Thyroid gland (tissue), 4 donors: ENCODE measurements at regions of chr5 and their contacts with region 1.

Region 1: DNA sequence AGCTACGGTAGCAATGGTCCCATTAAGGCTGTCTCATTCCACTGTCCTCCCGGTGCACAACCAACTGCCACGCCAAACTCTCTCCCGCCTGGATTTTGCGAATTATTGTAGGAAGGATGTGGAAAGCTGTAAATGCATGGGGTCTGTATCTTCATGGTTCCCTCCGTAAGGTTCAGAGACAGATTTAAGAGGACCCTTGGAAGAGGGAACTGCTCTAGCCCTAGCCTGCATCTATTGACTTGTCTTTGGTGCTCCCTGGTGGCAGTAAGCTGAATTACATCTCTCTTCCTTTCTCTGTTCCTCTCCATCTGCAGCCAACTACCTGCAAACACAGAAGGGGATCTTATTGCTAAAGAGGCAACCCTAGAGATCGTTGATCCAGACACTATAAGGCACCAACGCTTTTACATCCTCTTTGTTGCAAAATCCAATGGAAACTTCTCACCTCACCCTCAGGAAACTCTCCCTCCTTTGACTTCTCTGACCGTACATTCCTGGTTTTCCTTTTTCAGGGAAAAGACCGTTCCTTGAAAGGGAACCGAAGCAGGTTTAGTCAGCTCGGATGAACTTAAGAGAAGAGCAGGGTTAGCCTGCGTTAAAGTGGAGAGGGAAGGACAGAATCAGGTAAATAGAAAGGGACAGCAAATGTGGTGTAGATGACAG is 11.9 kb downstream of the CAPSL start:
- DNase-seq: peak; percentile 32 to 38
- H3K4me3 ChIP-seq: no peak overlapping the region
- H3K27ac ChIP-seq: no peak overlapping the region
- H3K4me1 ChIP-seq: no peaks in the 10 kb centered on the region
- H3K27me3 ChIP-seq: no peaks in the 10 kb centered on the region
- CTCF ChIP-seq: peak; percentile 75 to 94 (median 80)
- POLR2A ChIP-seq: no peak

Region 2: GRCh38 chr5:35617435-35618303 is 308.9 kb before region 1 on chr5 and contains the start of gene SPEF2:
- intact Hi-C with region 1: loop called (anchors 10 kb)
- DNase-seq: peak; percentile 86 to 87
- H3K4me3 ChIP-seq: peak within 1 kb of the TSS; percentile 66 to 88 (median 76)
- H3K27ac ChIP-seq: peak within 1 kb of the TSS in 2 of 3 donors; percentile 22 to 42
- H3K4me1 ChIP-seq: peaks cover 6% of the 10 kb centered on the region in 2 donors
- H3K27me3 ChIP-seq: no peaks in the 10 kb centered on the region
- CTCF ChIP-seq: peak; percentile 45 to 85 (median 79)
- POLR2A ChIP-seq: peak in 1 of 2 donors; percentile 8
- total RNA-seq, gene SPEF2: 17.7 to 39.5 (median 21.5) TPM

Region 3: DNA sequence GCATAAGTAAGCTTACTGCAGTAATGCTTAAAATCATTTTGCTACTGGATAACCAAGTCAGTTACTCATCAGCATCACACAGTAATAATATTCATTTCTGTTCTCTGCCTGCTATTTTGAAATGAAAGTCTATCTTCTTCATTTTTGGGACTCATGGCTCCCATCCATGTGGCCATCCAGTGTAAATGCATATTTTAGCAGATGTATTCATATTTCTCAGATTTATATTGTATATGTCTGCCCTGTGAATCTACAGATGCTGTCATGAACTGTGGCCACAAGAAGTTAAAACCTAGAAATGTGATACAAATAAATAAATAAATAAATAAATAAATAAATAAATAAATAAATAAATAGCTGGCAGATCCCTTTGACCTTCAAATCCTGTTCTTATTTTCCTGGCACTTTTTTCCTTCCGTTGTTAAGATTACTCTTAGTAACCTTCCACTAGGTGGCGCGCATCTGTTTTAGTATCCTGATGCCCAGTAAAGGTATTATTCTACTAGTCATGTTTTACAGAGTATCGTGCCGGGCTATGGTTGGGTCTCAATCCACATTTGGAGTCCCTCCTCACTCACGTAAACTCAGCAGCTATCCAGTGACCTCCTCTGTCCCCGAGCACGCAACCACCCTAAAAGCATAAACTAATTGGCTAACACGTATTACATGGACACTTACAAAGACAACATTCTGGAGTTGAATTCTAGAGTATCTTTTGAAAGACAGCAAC is 149.0 kb before region 1 on chr5:
- intact Hi-C with region 1: loop called (anchors 5 kb)
- DNase-seq: peak; percentile 79 to 84
- H3K4me3 ChIP-seq: no peak overlapping the region
- H3K27ac ChIP-seq: no peak overlapping the region
- H3K4me1 ChIP-seq: no peaks in the 10 kb centered on the region
- H3K27me3 ChIP-seq: no peaks in the 10 kb centered on the region
- CTCF ChIP-seq: peak in 5 of 6 experiments; percentile 40 to 73 (median 63)
- POLR2A ChIP-seq: no peak